Mammary epithelial cell (primary cell): ENCODE measurements at regions of chr18 and their contacts with region 1.

Region 1: DNA sequence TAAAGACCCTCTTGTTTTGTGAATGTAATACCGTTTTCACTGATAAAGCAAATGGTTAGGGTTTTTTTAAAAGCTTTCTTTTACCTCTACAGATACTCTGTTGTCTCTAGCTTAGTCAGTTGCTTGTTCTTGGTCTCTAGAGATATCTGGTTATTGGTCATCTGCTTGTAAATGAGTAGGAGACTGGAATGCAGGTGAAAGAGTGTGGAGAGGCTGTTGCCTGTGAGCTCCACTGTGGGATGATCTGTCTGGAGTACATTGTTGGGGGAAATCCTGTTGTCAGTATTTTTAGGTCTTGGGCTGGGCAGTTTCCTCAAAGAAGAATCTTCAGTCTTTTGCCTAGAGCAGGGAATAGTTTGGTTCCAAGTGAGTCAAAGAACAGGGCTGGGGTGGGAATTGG is 67.7 kb downstream of the SMCHD1 start:
- DNase-seq: no peak
- H3K4me3 ChIP-seq: no peak overlapping the region
- H3K27ac ChIP-seq: no peak overlapping the region
- H3K4me1 ChIP-seq: no peaks in the 10 kb centered on the region
- H3K27me3 ChIP-seq: no peaks in the 10 kb centered on the region
- CTCF ChIP-seq: no peak

Region 2: DNA sequence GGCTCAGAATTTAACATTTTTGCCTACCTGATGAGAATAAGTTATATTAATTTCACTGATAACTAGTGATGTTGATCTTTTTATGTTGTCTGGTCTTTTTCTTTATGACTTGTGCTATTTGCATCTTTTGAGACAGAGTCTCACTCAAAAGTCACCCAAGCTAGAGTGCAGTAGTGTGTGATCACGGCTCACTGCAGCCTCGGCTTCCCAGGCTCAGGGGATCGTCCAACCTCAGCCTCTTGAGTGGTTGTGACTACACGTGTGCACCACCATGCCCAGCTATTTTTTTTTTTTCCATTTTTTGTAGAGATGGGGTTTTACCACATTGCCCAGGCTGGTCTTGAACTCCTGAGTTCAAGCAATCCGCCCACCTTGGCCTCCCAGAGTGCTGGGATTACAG is 60.2 kb before region 1 on chr18:
- CTCF ChIA-PET with region 1: no interaction called
- dilution Hi-C with region 1: no loop called
- in situ Hi-C with region 1: no loop called
- intact Hi-C with region 1: loop called (anchors 10 kb)
- DNase-seq: no peak
- H3K4me3 ChIP-seq: no peak overlapping the region
- H3K27ac ChIP-seq: no peak overlapping the region
- H3K4me1 ChIP-seq: peaks cover 9% of the 10 kb centered on the region
- H3K27me3 ChIP-seq: no peaks in the 10 kb centered on the region
- CTCF ChIP-seq: no peak